CD8-positive, alpha-beta T cell (primary cell): ENCODE measurements at regions of chr20 and their contacts with region 1.

Region 1: GRCh38 chr20:53578492-53579222 is 15.0 kb downstream of the ZNF217 start:
- DNase-seq: peak in 8 of 9 experiments; percentile 39 to 92 (median 63)
- ATAC-seq: peak; percentile 32
- H3K4me3 ChIP-seq: peak overlapping the region; percentile 50 to 58
- H3K4me3 Mint-ChIP-seq: peak overlapping the region; percentile 87
- H3K27ac ChIP-seq: peak overlapping the region; percentile 46 to 83
- H3K27ac Mint-ChIP-seq: peak overlapping the region; percentile 94
- H3K4me1 ChIP-seq: peaks cover 86% of the 10 kb centered on the region
- H3K4me1 Mint-ChIP-seq: peaks cover 89% of the 10 kb centered on the region
- H3K27me3 ChIP-seq: no peaks in the 10 kb centered on the region
- H3K27me3 Mint-ChIP-seq: no peaks in the 10 kb centered on the region
- CTCF ChIP-seq: peak; percentile 95

Region 2: DNA sequence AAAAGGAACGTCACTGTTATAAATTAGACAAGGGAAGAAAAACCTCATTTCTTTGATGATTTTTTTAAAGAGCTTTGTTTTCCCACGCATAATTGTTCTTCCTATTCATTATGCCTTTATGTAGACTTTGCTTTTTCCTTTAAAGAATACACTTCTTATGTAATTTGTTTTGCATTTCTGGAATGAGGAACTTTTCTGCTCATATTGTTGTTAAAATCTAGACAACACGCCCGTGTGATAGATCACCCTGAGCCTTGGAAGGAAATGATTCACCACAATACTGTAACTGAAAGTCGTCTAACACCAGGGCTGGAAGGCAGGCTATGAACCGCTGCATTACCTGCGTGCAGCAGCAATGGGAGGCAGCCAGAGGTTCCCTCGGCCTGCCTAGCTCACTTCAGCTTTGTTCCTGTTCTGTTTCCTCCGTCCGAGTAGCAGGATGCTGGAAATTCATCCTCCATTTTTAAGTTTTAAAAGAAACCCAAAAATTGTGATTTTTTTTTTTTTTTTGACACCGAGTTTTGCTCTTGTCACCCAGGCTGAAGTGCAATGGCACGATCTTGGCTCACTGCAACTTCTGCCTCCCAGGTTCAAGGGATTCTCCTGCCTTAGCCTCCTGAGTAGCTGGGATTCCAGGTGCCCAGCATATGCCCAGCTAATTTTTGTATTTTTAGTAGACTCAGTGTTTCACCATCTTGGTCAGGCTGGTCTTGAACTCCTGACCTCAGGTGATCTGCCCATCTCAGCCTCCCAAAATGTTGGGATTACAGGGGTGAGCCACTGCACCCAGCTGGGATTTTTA is 64.6 kb after region 1 on chr20:
- CTCF ChIA-PET with region 1: interaction called, 5 read pairs
- POLR2A ChIA-PET with region 1: interaction called, 3 read pairs
- intact Hi-C with region 1: loop called in 1 of 2 experiments (anchors 2 kb)
- DNase-seq: peak; percentile 39 to 88 (median 71)
- ATAC-seq: peak; percentile 93
- H3K4me3 ChIP-seq: peak overlapping the region; percentile 19 to 47
- H3K4me3 Mint-ChIP-seq: peak overlapping the region; percentile 68
- H3K27ac ChIP-seq: peak overlapping the region; percentile 67 to 80
- H3K27ac Mint-ChIP-seq: peak overlapping the region; percentile 92
- H3K4me1 ChIP-seq: peaks cover 37% of the 10 kb centered on the region
- H3K4me1 Mint-ChIP-seq: peaks cover 55% of the 10 kb centered on the region
- H3K27me3 ChIP-seq: no peaks in the 10 kb centered on the region
- H3K27me3 Mint-ChIP-seq: no peaks in the 10 kb centered on the region
- CTCF ChIP-seq: no peak

Region 3: DNA sequence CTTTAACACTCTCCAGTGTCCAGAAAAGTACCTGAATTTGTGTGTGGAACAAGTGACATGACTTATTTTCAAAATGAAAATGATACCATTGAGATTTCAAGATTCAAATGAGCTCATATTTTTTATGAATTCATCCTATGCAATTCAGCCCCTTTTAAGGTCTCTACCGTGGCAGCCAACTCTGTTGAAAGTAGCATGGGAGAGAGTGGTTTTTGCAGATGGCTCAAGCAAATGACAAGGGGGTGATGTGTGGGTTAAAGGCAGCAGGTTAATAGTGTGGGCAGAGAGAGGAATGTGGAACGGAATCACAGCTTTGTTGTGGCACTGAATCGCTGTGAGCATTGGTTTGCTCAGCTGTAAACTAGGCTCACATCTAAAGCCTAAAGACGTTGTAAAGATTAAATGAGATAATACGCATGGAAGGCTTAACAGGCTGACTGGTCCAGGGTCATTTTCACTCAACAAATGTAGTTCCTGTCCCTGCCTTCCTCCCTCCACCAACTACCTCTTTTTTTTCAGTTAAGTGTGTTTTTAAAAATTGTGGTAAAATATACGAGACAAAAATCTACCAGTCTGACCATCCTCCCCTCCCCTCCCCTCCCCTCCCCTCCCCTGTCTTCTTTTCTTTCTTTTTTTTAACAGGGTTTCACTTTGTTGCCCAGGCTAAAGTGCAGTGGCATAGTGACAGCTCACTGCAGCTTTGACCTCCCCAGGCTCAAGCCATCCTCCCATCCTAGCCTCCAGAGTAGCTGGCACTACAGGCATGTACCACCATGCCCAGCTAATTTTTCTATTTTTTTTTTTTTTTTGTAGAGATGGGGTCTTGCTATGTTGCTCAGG is 129.7 kb after region 1 on chr20:
- CTCF ChIA-PET with region 1: interaction called, 5 read pairs
- POLR2A ChIA-PET with region 1: no interaction called
- intact Hi-C with region 1: loop called in 1 of 2 experiments (anchors 2 kb)
- DNase-seq: peak in 4 of 9 experiments; percentile 13 to 58 (median 25)
- ATAC-seq: peak; percentile 48
- H3K4me3 ChIP-seq: no peak overlapping the region
- H3K4me3 Mint-ChIP-seq: peak overlapping the region; percentile 48
- H3K27ac ChIP-seq: peak overlapping the region; percentile 29 to 44
- H3K27ac Mint-ChIP-seq: peak overlapping the region; percentile 93
- H3K4me1 ChIP-seq: peaks cover 58% of the 10 kb centered on the region
- H3K4me1 Mint-ChIP-seq: peaks cover 55% of the 10 kb centered on the region
- H3K27me3 ChIP-seq: no peaks in the 10 kb centered on the region
- H3K27me3 Mint-ChIP-seq: no peaks in the 10 kb centered on the region
- CTCF ChIP-seq: no peak

Region 4: DNA sequence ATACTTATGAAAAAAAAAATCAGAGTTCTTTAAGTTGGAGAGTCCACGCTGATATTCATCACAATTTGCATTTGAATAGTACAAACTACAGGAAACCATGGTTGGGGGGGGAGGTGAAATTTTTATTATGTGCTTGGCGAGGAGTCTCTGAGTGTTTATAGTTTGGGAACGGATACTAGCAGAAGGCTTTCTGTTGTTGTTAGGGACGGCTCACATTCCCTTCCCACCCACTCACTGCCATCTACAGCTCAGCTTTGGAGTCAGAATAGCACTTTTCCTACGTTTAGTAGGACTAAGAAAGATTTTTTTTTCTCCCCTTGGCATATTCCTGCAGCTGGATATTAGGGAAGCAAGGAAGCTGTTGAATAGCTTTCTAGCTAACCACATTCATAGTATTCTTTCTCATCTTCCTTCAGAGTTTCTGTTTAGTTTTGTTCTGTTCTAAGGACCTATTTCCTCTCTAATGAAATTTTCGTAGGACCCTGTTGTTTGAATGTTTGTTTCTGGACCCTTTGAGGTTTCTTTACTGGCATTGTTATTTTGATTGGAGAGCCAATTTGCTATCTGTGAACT is 250.1 kb after region 1 on chr20:
- CTCF ChIA-PET with region 1: no interaction called
- POLR2A ChIA-PET with region 1: no interaction called
- intact Hi-C with region 1: loop called in 1 of 2 experiments (anchors 5 kb)
- DNase-seq: peak in 2 of 9 experiments; percentile 27 to 51
- ATAC-seq: peak; percentile 23
- H3K4me3 ChIP-seq: peak overlapping the region; percentile 28 to 33
- H3K4me3 Mint-ChIP-seq: peak overlapping the region; percentile 86
- H3K27ac ChIP-seq: peak overlapping the region; percentile 47 to 88
- H3K27ac Mint-ChIP-seq: peak overlapping the region; percentile 97
- H3K4me1 ChIP-seq: peaks cover 34% of the 10 kb centered on the region
- H3K4me1 Mint-ChIP-seq: peaks cover 57% of the 10 kb centered on the region
- H3K27me3 ChIP-seq: no peaks in the 10 kb centered on the region
- H3K27me3 Mint-ChIP-seq: no peaks in the 10 kb centered on the region
- CTCF ChIP-seq: no peak

Region 5: DNA sequence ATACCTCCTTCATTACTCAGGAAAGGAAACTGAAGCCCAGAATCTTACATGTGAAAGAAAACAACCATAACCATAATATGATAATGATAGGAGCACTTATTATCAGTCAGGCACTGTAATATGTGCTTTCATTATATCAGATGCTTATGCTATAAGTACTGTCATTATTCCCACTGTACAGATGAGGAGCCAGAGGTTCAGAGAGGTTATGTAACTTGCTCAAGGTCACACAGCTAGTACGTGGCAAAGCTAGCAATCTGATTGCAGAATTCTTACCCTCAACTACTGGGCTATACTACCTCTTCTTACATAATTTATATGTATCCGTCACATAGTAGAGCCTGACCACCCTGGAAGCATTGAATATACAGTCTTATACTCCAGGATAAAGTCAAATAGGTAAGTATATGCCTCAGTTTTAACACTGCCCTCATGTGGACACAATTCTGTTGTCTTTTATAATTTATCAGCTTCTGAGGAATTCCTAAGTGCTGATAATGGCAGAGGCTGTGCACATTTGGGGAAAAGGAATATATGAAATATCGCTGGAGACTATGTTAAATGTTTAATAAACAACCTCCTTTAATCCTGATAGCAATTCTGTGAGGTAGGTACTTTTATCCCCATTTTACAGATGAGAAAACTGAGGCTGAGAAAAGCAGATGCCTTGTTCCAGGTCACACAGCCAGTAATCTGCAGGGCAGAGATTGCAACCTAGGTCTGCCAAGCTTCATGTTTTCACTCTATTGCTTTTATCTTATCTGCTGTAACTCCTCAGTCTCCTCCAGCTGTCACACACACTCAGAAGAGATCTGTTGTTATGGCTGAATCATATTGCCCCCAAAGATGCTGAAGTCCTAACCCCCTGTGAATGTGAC is 478.3 kb after region 1 on chr20:
- CTCF ChIA-PET with region 1: interaction called, 4 read pairs
- POLR2A ChIA-PET with region 1: no interaction called
- intact Hi-C with region 1: loop called (anchors 2 kb)
- DNase-seq: no peak
- ATAC-seq: no peak
- H3K4me3 ChIP-seq: no peak overlapping the region
- H3K4me3 Mint-ChIP-seq: no peak overlapping the region
- H3K27ac ChIP-seq: no peak overlapping the region
- H3K27ac Mint-ChIP-seq: no peak overlapping the region
- H3K4me1 ChIP-seq: no peaks in the 10 kb centered on the region
- H3K4me1 Mint-ChIP-seq: no peaks in the 10 kb centered on the region
- H3K27me3 ChIP-seq: no peaks in the 10 kb centered on the region
- H3K27me3 Mint-ChIP-seq: peaks cover 3% of the 10 kb centered on the region
- CTCF ChIP-seq: no peak

Region 6: DNA sequence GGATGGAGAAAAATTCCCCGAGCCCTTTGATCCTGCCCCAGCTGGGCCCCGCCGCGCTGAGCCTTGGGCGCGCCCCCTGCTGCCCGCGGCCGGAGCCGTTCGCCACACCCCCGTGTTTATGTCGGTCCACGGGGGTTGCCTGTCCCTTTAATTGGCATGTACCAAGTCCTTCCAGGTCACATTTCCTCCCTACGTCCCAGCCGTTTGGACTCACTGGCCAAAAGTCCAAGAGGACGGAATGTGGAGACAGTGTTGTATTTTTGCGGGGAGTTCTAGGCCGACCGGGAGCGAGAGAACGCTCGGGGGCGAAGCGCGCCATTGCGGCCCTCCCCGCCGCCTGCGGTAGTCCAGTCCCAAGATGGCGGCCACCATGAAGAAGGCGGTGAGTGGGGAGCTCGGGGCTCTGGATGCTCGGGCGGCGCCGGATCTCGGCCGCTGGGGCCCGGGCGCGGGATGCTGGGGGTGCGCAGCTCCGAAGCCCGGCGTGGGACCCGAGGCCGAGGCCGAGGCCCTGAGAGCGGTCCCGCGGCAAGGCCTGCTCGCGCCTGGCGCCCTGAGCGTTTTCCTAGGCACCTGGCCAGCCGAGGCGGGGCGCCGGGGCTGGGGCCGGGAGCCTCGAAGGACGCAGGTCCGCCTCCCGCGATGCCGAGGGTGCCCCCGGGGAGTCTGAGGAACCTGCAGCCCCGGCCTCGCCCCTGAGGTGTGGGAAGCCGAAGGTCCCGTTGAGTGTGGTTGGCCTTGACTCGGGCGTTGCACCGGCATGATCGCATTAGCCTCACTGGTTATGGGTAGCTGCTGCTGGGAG is 629.3 kb after region 1 on chr20 and contains the start of gene PFDN4:
- CTCF ChIA-PET with region 1: no interaction called
- POLR2A ChIA-PET with region 1: no interaction called
- intact Hi-C with region 1: loop called in 1 of 2 experiments (anchors 10 kb)
- DNase-seq: peak; percentile 52 to 89 (median 73)
- ATAC-seq: peak; percentile 91
- H3K4me3 ChIP-seq: peak within 1 kb of the TSS; percentile 67 to 97
- H3K4me3 Mint-ChIP-seq: peak within 1 kb of the TSS; percentile 98
- H3K27ac ChIP-seq: peak within 1 kb of the TSS; percentile 99 to 100
- H3K27ac Mint-ChIP-seq: peak within 1 kb of the TSS; percentile 100
- H3K4me1 ChIP-seq: peaks cover 13% of the 10 kb centered on the region
- H3K4me1 Mint-ChIP-seq: peaks cover 37% of the 10 kb centered on the region
- H3K27me3 ChIP-seq: no peaks in the 10 kb centered on the region
- H3K27me3 Mint-ChIP-seq: no peaks in the 10 kb centered on the region
- CTCF ChIP-seq: no peak
- total RNA-seq, gene PFDN4: 19.2 to 20.2 TPM